ENCODE measurements at regions of chr11 and their contacts with region 1.

Region 1: GRCh38 chr11:59668950-59669610 is at the start of gene PATL1:
- DNase-seq: peak; percentile 95
- ATAC-seq: peak; percentile 95
- H3K4me3 ChIP-seq: peak within 1 kb of the TSS; percentile 87 to 99 (median 90)
- H3K27ac ChIP-seq: peak within 1 kb of the TSS; percentile 83
- H3K4me1 ChIP-seq: peaks cover 34% of the 10 kb centered on the region
- H3K27me3 ChIP-seq: no peaks in the 10 kb centered on the region; a peak in 1 of 5 replicates
- CTCF ChIP-seq: 0 out of 2 replicates have a peak, but pooled peaks have one; percentile 11
- EP300 ChIP-seq: no peak
- POLR2A ChIP-seq: peak; percentile 57 to 81
- RAD21 ChIP-seq: no peak
- total RNA-seq, gene PATL1: 12.9 and 16.6 TPM in 2 replicates

Region 2: GRCh38 chr11:59550368-59550841 is 118.7 kb before region 1 on chr11:
- CTCF ChIA-PET with region 1: no interaction called
- POLR2A ChIA-PET with region 1: interaction called, 15 read pairs
- in situ Hi-C with region 1: loop called (anchors 5 kb)
- intact Hi-C with region 1: loop called (anchors 2 kb)
- DNase-seq: peak; percentile 94
- ATAC-seq: peak; percentile 96
- H3K4me3 ChIP-seq: peak overlapping the region; percentile 62 to 72 (median 72)
- H3K27ac ChIP-seq: peak overlapping the region; percentile 79
- H3K4me1 ChIP-seq: peaks cover 29% of the 10 kb centered on the region
- H3K27me3 ChIP-seq: no peaks in the 10 kb centered on the region; a peak in 2 of 5 replicates
- CTCF ChIP-seq: peak; percentile 64
- EP300 ChIP-seq: 0 out of 4 replicates have a peak, but pooled peaks of 1 of the 2 experiments have one; percentile 10
- POLR2A ChIP-seq: no peak
- RAD21 ChIP-seq: peak; percentile 32; the same call in 1 of the 2 replicates

Region 3: GRCh38 chr11:59560702-59561469 is 108.2 kb before region 1 on chr11:
- CTCF ChIA-PET with region 1: no interaction called
- POLR2A ChIA-PET with region 1: interaction called, 16 read pairs
- in situ Hi-C with region 1: loop called (anchors 5 kb)
- intact Hi-C with region 1: no loop called
- DNase-seq: peak; percentile 77
- ATAC-seq: peak; percentile 42
- H3K4me3 ChIP-seq: peak overlapping the region; percentile 86 to 96 (median 92)
- H3K27ac ChIP-seq: peak overlapping the region; percentile 48
- H3K4me1 ChIP-seq: peaks cover 47% of the 10 kb centered on the region
- H3K27me3 ChIP-seq: no peaks in the 10 kb centered on the region; a peak in 1 of 5 replicates
- CTCF ChIP-seq: no peak
- EP300 ChIP-seq: no peak
- POLR2A ChIP-seq: no peak
- RAD21 ChIP-seq: no peak

Region 4: DNA sequence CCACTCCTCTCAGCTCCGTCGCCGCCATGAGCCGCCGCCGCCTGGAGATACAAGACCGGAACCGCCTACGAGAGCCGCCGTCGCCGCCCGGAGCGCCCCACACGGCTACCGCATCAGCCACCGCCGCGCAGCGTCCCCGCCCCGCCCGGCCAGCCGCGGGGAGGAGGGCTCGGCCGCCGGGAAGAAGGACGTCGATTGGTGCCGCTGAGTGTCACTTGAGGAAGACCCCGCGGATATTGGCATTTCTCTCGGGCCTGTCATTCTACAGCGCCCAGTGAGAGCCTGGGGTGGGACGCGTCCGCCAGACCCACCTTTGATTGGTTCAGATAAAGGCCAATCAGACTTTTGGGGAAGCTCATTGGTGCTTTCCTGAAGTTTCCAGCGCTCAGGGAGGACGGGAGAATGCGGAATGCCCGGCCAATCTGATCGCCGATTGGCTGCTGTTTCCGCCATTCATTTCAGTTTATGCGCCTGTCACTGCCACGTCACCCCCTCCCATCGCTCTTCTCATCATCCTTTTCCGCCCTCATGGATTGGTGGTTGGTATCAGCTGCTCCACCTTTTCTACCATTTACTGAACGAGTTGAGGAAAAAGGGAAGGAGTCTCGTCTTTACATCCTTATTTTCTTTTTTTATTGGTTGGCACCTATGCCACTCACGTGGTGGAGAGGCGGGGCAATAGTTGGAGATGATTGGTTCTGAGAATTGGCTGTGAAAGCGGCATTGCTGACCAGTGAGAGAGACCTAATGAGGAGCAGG is 53.3 kb before region 1 on chr11 and contains the start of gene OSBP:
- CTCF ChIA-PET with region 1: no interaction called
- POLR2A ChIA-PET with region 1: interaction called, 42 read pairs
- in situ Hi-C with region 1: no loop called
- intact Hi-C with region 1: loop called (anchors 1 kb)
- DNase-seq: peak; percentile 99
- ATAC-seq: peak; percentile 96
- H3K4me3 ChIP-seq: peak within 1 kb of the TSS; percentile 84 to 93 (median 90)
- H3K27ac ChIP-seq: peak within 1 kb of the TSS; percentile 80
- H3K4me1 ChIP-seq: peaks cover 53% of the 10 kb centered on the region
- H3K27me3 ChIP-seq: no peaks in the 10 kb centered on the region; a peak in 1 of 5 replicates
- CTCF ChIP-seq: no peak
- EP300 ChIP-seq: no peak
- POLR2A ChIP-seq: peak; percentile 40 to 68; a peak in 3 of 4 replicates
- RAD21 ChIP-seq: no peak
- total RNA-seq, gene OSBP: 13.5 and 23.0 TPM in 2 replicates

Region 5: GRCh38 chr11:59643390-59643789 is 25.7 kb before region 1 on chr11:
- CTCF ChIA-PET with region 1: no interaction called
- POLR2A ChIA-PET with region 1: interaction called, 16 read pairs
- in situ Hi-C with region 1: no loop called
- intact Hi-C with region 1: no loop called
- DNase-seq: peak; percentile 83
- ATAC-seq: peak; percentile 84
- H3K4me3 ChIP-seq: no peak overlapping the region
- H3K27ac ChIP-seq: peak overlapping the region; percentile 43
- H3K4me1 ChIP-seq: peaks cover 18% of the 10 kb centered on the region
- H3K27me3 ChIP-seq: no peaks in the 10 kb centered on the region
- CTCF ChIP-seq: no peak
- EP300 ChIP-seq: no peak
- POLR2A ChIP-seq: no peak
- RAD21 ChIP-seq: no peak

Region 6: DNA sequence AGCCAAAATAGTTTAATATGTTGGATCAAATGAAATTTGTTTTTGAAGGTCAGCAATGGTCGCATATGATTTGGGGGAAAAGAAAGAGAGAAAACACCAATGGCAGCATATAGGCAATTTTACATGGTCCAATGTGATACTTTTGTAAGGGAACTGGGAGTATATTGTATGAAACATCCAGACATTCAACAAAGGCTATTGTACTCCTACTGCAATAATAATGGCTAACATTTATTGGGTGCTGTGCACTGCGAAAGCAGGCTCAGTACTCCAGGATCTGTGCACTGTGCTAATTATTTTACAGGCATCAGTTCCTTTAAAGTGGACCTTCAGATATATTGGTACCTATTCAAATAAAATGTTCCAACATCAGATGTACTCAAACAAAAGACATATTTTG is 50.5 kb after region 1 on chr11:
- CTCF ChIA-PET with region 1: no interaction called
- POLR2A ChIA-PET with region 1: no interaction called
- in situ Hi-C with region 1: no loop called
- intact Hi-C with region 1: no loop called
- DNase-seq: no peak
- ATAC-seq: no peak
- H3K4me3 ChIP-seq: no peak overlapping the region
- H3K27ac ChIP-seq: no peak overlapping the region
- H3K4me1 ChIP-seq: no peaks in the 10 kb centered on the region
- H3K27me3 ChIP-seq: no peaks in the 10 kb centered on the region; a peak in 2 of 5 replicates
- CTCF ChIP-seq: no peak
- EP300 ChIP-seq: no peak
- POLR2A ChIP-seq: no peak
- RAD21 ChIP-seq: no peak

Region 7: DNA sequence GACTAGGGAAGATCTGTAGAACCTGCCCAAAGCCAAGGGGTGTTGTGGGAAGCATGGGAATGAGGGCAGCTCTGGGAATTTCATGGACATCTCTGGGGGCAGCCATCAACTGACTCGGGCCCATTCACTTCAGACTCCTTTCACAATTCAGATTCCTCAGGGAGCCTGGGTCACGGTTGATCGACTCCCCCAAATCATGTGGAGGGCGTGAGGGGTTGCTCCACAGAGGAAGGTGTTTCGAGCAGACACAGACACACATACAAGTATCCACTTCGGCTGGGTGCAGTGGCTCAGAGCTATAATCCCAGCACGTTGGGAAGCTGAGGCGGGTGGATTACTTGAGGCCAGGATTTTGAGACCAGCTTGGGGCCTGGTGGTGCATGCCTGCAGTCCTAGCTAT is 101.8 kb after region 1 on chr11:
- CTCF ChIA-PET with region 1: no interaction called
- POLR2A ChIA-PET with region 1: no interaction called
- in situ Hi-C with region 1: no loop called
- intact Hi-C with region 1: no loop called
- DNase-seq: no peak
- ATAC-seq: no peak
- H3K4me3 ChIP-seq: no peak overlapping the region
- H3K27ac ChIP-seq: no peak overlapping the region
- H3K4me1 ChIP-seq: peaks cover 1% of the 10 kb centered on the region; the same call in 1 of the 2 replicates
- H3K27me3 ChIP-seq: no peaks in the 10 kb centered on the region
- CTCF ChIP-seq: no peak
- EP300 ChIP-seq: no peak
- POLR2A ChIP-seq: no peak
- RAD21 ChIP-seq: no peak

Region 8: DNA sequence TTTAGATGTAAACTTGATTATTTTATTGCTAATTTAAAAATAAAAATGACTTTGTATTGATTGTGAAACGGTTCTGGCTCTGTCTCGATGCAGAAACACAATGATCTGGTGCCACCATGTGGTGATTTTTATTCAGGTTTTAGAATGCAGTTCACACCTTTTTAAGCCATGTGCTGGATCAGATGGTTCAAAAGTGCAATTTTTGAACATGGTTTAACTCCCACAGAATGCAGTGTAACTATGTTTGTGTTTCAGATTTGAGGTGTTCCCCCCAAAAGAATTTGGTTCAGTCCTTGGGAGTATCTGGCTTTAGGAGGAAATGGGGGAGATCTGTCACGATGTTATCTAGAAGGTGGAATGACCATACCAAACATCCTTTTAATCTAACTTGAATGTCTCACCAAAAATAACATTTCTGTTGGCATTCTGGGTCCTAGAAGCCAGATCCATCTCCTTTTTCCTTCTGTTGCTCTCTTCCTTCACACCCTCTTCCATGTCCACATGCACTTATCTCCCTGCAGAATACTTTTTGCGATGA is 133.6 kb after region 1 on chr11:
- CTCF ChIA-PET with region 1: no interaction called
- POLR2A ChIA-PET with region 1: no interaction called
- in situ Hi-C with region 1: loop called (anchors 10 kb)
- intact Hi-C with region 1: loop called (anchors 10 kb)
- DNase-seq: peak; percentile 51
- ATAC-seq: peak; percentile 76
- H3K4me3 ChIP-seq: no peak overlapping the region
- H3K27ac ChIP-seq: no peak overlapping the region
- H3K4me1 ChIP-seq: peaks cover 11% of the 10 kb centered on the region
- H3K27me3 ChIP-seq: no peaks in the 10 kb centered on the region
- CTCF ChIP-seq: peak; percentile 77
- EP300 ChIP-seq: no peak
- POLR2A ChIP-seq: no peak
- RAD21 ChIP-seq: peak; percentile 77